ENCODE measurements at regions of chr19 and their contacts with region 1.

Region 1: DNA sequence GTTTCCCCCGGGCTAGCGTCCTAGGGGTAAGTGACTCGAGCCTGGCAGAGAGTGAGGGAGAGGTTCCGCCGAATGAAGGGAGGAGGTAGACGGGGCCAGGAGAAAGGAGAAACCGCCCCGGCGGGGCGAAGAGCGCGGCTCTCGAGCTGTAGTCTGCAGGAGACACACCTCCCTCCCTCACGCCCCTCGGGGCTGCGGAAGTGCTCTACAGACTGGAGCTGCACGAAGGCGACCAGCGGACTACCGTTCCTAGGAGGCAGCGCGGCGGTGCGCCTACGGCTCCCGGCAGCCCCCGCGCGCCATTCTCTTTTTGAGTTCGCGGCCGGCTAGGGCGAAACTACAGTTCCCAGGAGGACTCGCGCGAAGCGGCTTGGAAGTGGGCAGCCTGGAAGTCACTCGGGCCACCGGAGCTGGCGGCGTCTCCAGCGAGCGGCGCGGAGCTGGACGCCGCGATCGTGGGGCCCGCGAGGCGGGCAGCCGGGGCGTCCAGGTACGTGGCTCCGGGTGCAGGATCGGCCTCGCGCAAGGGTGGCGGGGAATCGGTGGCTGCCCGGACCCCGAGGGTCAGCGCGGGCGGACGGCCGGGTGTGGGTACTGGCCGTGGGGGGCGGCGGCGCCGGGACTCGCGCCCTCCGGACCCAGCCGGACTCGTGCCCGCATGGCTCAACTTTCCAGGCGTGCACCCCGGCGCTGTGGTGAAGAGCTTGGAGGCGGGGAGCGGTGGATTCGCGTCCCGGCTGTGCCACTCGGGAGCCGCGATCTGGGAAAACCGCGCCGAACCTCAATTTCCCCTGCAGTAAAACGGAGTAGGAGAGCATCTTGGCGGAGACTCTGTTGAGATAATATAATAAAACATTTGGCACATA is at the start of gene SIPA1L3:
- H3K4me3 ChIP-seq: peak within 1 kb of the TSS; percentile 68
- H3K27ac ChIP-seq: peak within 1 kb of the TSS; percentile 81
- H3K4me1 ChIP-seq: peaks cover 27% of the 10 kb centered on the region
- CTCF ChIP-seq: peak; percentile 79; the same call in 1 of the 2 replicates

Region 2: GRCh38 chr19:37572203-37572602 is 334.9 kb before region 1 on chr19:
- CTCF ChIA-PET with region 1: no interaction called
- POLR2A ChIA-PET with region 1: no interaction called
- H3K4me3 ChIP-seq: no peak overlapping the region
- H3K27ac ChIP-seq: no peak overlapping the region
- H3K4me1 ChIP-seq: no peaks in the 10 kb centered on the region
- CTCF ChIP-seq: no peak

Region 3: DNA sequence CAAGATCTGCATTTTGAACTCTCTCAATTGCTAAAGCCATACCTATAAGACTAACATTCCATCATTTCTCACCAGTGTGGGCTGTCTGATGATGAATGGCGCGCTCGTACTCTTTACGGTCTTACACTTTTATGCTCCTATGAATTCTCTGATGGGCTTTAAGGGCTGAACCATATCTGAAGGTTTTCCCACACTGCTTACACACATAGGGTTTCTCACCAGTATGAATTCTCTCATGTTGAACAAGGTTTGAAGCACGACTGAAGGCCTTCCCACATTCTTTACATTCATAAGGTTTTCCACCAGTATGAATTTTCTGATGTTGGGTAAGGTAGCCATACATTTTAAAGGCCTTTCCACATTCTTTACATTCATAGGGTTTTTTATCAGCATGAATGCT is 168.7 kb before region 1 on chr19:
- CTCF ChIA-PET with region 1: no interaction called
- POLR2A ChIA-PET with region 1: no interaction called
- H3K4me3 ChIP-seq: no peak overlapping the region
- H3K27ac ChIP-seq: no peak overlapping the region
- H3K4me1 ChIP-seq: no peaks in the 10 kb centered on the region
- CTCF ChIP-seq: no peak

Region 4: GRCh38 chr19:37885392-37885791 is 21.7 kb before region 1 on chr19:
- CTCF ChIA-PET with region 1: interaction called, 10 read pairs
- POLR2A ChIA-PET with region 1: no interaction called
- H3K4me3 ChIP-seq: no peak overlapping the region
- H3K27ac ChIP-seq: no peak overlapping the region
- H3K4me1 ChIP-seq: no peaks in the 10 kb centered on the region
- CTCF ChIP-seq: no peak

Region 5: DNA sequence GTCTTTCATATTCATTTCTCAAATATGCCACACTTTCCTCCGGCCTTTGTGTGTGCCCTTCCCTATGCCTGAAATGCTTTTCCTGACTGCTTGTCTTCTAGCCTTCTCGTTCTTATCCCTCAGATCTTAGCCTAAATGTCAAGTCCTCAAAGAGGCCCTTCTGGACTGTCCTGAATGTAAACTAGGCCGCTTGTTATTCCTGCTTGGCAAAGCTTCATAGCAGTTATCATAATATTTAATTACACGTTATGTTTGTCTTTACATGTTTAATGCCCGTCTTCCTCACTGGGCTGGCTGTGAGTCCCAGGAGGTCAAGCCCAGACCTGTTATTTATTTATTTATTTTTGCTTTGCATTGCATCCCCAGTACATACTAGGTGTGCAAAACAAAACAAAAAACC is 62.6 kb after region 1 on chr19:
- CTCF ChIA-PET with region 1: no interaction called
- POLR2A ChIA-PET with region 1: no interaction called
- H3K4me3 ChIP-seq: no peak overlapping the region
- H3K27ac ChIP-seq: no peak overlapping the region
- H3K4me1 ChIP-seq: peaks cover 7% of the 10 kb centered on the region; the same call in 1 of the 2 replicates
- CTCF ChIP-seq: no peak

Region 6: DNA sequence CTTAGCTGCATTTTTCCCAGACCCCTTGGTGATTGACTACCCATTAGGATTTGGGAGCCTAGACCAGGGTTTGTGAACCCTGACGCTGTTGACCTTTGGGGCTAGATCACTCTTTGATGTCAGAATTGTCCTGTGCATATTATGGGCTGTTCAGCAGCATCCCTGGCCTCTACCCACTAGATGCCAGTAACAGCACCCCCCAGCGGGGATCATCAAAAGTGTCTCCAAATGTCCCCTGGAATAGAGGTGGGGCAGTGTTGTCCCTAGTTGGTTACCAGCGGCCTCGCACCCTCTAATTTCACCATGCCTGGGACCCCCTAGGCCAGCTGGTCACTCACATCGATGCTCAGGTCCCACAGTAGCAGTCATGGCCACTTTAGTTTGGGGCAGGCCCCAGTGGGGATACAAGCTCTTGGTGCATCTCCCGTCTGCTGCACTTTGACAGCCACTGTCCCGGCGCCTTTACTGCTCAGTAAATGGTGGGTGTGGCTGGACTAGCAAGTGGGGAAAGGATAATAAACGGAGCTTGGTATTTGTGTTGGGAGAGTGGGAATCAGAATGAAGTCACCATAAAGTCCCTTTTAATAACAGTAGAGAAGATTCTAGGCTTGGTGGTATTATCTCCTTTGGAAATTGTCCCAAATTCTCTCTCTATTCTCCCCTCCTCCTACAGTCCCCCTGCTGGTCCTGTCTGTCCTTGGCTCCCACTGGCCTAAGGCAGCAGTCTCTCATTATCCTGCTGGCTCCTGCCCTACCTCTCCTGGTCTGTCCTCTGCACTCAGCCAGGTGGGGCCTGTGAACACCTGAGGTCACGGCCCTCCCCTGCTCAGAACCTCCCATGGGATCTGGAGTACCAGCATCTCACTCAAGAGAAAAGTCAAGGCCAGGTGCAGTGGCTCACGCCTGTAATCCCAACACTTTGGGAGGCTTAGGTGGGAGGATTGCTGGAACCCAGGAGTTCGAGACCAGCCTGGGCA is 80.5 kb after region 1 on chr19:
- CTCF ChIA-PET with region 1: interaction called, 30 read pairs
- POLR2A ChIA-PET with region 1: interaction called, 3 read pairs
- H3K4me3 ChIP-seq: no peak overlapping the region
- H3K27ac ChIP-seq: no peak overlapping the region
- H3K4me1 ChIP-seq: peaks cover 5% of the 10 kb centered on the region
- CTCF ChIP-seq: peak; percentile 46; the same call in 1 of the 2 replicates

Region 7: GRCh38 chr19:38044267-38045111 is 137.4 kb after region 1 on chr19:
- CTCF ChIA-PET with region 1: interaction called, 23 read pairs
- POLR2A ChIA-PET with region 1: no interaction called
- H3K4me3 ChIP-seq: no peak overlapping the region
- H3K27ac ChIP-seq: no peak overlapping the region
- H3K4me1 ChIP-seq: no peaks in the 10 kb centered on the region
- CTCF ChIP-seq: peak; percentile 35; the same call in 1 of the 2 replicates

Region 8: DNA sequence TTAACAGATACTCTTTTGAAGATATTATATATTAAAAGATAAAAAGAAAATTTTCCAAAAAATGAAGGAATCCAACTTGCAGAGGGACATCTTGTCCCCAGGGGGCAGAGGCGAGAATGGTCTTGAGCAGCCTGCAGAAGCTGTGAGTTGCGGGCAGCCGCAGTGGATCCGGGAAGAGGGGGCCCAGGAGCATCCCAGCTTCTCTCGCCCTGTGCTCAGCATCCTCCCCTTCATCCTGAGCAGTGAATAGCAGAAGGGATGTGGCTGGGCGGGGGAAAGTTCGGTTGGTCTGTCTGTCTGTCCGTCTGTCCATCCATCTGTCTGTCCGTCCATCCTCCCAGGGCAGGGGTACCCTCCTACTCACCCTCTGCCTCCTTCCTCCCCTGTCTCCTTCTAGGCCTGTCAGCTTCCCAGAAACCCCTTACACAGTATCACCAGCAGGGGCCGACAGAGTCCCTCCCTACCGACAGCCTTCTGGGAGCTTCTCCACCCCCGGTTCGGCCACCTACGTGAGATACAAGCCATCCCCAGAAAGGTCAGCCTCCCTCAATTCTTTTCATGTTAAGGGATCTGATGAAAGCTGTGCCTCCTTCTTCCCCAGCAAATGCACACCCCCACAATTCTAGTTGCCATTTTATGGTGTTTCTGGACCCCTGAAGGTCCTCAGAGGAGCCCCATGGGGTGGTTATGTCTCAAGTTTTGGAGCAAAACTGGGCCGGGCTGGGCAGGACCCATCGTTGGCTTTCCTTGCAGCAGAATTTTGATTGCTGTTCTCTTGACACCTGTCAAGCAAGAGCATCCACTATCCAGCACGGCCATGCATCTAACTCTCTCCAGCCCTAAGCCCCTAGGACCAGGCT is 235.3 kb after region 1 on chr19:
- CTCF ChIA-PET with region 1: interaction called, 27 read pairs
- POLR2A ChIA-PET with region 1: interaction called, 5 read pairs
- H3K4me3 ChIP-seq: no peak overlapping the region
- H3K27ac ChIP-seq: no peak overlapping the region
- H3K4me1 ChIP-seq: peaks cover 2% of the 10 kb centered on the region; the same call in 1 of the 2 replicates
- CTCF ChIP-seq: peak; percentile 90

Region 9: GRCh38 chr19:38263689-38264485 is 356.8 kb after region 1 on chr19:
- CTCF ChIA-PET with region 1: interaction called, 6 read pairs
- POLR2A ChIA-PET with region 1: interaction called, 14 read pairs
- H3K4me3 ChIP-seq: peak overlapping the region; percentile 52
- H3K27ac ChIP-seq: peak overlapping the region; percentile 90
- H3K4me1 ChIP-seq: peaks cover 44% of the 10 kb centered on the region
- CTCF ChIP-seq: no peak

Region 10: DNA sequence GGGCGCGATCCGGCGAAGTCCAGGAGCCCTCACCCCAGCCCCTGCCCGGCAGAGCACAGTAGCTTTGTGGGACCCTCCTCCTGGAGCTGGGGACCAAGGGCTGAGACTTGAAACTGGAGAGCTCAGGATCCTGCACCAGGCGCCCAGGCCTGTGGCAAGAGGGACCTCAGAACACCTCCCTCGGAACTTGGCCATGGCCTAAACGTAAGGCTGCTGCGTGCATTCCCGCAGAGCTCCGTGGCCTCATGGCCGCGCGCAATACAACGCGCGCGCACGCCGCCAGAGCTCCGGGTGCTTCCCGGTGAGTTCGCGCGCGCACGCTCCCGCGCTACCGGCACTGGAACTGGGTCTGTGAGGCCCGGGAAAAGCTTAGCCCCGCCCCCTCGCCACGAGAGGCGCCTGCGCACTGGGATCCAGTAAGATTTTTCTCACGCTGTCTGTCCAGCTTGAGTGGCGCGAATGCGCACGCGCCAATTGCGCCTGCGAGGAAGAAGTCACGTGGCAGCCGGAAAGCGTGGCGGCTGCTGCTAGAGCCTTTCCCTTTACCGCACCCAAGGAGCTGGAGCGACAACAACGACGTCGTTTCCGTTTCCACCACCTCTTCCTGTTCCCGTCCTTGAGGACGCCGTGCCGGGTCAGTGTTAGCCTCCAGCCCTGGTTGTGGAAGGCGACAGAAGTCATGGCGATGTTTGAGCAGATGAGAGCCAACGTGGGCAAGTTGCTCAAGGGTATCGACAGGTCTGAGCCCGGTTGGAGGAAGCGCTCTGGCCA is 711.7 kb after region 1 on chr19 and contains the start of gene EIF3K:
- CTCF ChIA-PET with region 1: no interaction called
- POLR2A ChIA-PET with region 1: interaction called, 11 read pairs
- H3K4me3 ChIP-seq: peak within 1 kb of the TSS; percentile 65
- H3K27ac ChIP-seq: peak within 1 kb of the TSS; percentile 94
- H3K4me1 ChIP-seq: peaks cover 16% of the 10 kb centered on the region
- CTCF ChIP-seq: no peak

Measured in HEK293 (cell line).